Pancreas (tissue), 10 donors: ENCODE measurements at regions of chr4 and their contacts with region 1.

Region 1: DNA sequence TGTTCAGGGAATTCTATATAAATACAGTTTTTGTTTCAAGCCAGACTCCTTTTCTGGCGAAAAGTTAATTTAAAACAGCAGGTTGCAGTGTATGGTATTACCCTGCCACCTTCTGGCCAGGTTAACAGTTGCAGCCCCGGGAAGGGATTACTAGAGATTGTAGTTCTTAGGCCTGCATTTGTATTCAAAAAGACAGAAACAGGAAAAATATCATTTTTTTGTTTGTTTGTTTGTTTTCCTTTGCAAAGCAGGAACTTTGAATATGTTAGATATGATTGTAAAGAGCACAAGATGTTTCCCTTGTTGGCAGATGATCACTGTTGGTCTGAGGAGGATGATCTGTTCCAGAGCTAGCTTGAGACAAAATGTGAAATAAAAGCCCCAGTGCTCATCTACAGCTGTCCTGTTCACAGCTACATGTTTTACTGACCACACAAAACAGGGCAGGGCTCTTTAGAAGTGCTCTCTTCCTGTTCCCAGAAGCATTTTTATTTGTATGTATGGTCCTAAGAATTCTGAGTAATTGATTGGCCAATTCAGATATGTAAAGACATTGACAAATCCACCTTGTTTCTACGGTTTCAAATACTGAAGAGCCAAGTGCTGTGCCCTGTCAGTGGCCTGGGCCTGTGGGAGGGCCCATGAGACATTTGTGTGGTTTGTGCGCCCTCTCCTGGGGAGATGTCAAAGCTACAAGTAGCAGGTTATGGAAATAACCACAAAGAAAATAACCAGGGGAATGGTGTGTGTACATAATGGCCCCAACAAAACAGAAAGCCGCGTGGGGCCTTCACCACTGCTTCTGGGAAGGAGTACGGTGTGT is 57.9 kb downstream of the CLDN22 start:
- DNase-seq: peak; percentile 73 to 84 (median 83)
- ATAC-seq: peak; percentile 95 to 97 (median 96)
- H3K4me3 ChIP-seq: no peak overlapping the region
- H3K27ac ChIP-seq: peak overlapping the region in 2 of 4 donors; percentile 51
- H3K4me1 ChIP-seq: peaks cover 0 to 13% (median 3%) of the 10 kb centered on the region in 3 donors
- H3K27me3 ChIP-seq: no peaks in the 10 kb centered on the region
- CTCF ChIP-seq: peak; percentile 59 to 78 (median 69)

Region 2: DNA sequence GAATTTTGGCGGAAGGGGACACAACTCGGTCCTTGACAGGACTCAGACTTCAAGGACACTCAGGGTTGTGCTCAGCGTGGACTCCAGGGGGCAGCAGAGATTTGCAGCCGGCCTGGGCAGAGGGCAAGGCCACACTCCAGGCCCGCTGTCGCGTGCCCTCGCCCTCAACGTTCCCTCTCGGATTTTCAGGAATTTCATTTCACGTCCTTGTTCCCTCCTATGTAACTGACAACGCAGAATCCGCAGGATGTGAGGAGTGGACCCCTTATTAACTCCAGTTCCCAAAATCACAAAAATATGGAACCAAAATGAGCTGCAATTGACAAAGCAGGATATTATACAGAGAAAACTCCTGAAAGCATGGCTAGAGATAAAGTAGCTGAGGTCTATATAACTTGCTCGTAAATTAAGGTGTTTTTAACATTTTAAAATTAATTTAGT is 323.9 kb before region 1 on chr4:
- intact Hi-C with region 1: loop called in 2 of 3 experiments (anchors 5 to 10 kb)
- DNase-seq: peak; percentile 59 to 87 (median 78)
- ATAC-seq: peak; percentile 98 to 100 (median 100)
- H3K4me3 ChIP-seq: no peak overlapping the region
- H3K27ac ChIP-seq: no peak overlapping the region
- H3K4me1 ChIP-seq: no peaks in the 10 kb centered on the region
- H3K27me3 ChIP-seq: no peaks in the 10 kb centered on the region
- CTCF ChIP-seq: peak; percentile 68 to 89 (median 78)

Region 3: GRCh38 chr4:182955411-182955810 is 306.8 kb before region 1 on chr4:
- intact Hi-C with region 1: loop called in 1 of 3 experiments (anchors 10 kb)
- DNase-seq: no peak
- ATAC-seq: no peak
- H3K4me3 ChIP-seq: no peak overlapping the region
- H3K27ac ChIP-seq: no peak overlapping the region
- H3K4me1 ChIP-seq: no peaks in the 10 kb centered on the region
- H3K27me3 ChIP-seq: no peaks in the 10 kb centered on the region
- CTCF ChIP-seq: no peak

Region 4: DNA sequence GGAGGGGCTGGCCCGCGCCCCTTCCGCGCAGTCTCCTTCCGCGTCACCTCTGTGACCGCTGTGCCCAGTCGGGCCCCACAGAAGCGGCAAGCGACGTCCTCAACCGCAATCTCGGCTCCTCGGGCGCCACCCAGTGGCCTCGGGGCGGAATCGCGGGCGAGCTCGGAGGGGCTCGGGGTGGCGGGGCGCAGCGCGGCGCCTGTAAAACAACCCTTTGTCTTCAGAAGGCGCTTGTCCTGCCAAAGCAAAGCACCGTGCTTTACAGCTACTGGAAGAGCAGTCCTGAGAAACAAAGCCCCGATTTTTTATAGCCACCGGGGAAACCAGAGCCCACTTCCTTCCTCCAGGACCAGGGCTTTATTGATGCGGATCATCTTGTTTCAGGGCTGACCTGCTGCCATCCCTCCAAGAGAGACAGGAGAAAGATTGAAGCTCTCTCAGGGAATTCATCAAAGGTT is 145.0 kb after region 1 on chr4:
- intact Hi-C with region 1: loop called in 1 of 3 experiments (anchors 10 kb)
- DNase-seq: peak; percentile 69 to 97 (median 84)
- ATAC-seq: peak; percentile 89 to 96 (median 96)
- H3K4me3 ChIP-seq: peak overlapping the region in 3 of 4 donors; percentile 3 to 42 (median 28)
- H3K27ac ChIP-seq: peak overlapping the region in 3 of 4 donors; percentile 5 to 52 (median 7)
- H3K4me1 ChIP-seq: no peaks in the 10 kb centered on the region
- H3K27me3 ChIP-seq: no peaks in the 10 kb centered on the region
- CTCF ChIP-seq: peak; percentile 88 to 98 (median 96)